CD14-positive monocyte (primary cell): ENCODE measurements at regions of chr5 and their contacts with region 1.

Region 1: DNA sequence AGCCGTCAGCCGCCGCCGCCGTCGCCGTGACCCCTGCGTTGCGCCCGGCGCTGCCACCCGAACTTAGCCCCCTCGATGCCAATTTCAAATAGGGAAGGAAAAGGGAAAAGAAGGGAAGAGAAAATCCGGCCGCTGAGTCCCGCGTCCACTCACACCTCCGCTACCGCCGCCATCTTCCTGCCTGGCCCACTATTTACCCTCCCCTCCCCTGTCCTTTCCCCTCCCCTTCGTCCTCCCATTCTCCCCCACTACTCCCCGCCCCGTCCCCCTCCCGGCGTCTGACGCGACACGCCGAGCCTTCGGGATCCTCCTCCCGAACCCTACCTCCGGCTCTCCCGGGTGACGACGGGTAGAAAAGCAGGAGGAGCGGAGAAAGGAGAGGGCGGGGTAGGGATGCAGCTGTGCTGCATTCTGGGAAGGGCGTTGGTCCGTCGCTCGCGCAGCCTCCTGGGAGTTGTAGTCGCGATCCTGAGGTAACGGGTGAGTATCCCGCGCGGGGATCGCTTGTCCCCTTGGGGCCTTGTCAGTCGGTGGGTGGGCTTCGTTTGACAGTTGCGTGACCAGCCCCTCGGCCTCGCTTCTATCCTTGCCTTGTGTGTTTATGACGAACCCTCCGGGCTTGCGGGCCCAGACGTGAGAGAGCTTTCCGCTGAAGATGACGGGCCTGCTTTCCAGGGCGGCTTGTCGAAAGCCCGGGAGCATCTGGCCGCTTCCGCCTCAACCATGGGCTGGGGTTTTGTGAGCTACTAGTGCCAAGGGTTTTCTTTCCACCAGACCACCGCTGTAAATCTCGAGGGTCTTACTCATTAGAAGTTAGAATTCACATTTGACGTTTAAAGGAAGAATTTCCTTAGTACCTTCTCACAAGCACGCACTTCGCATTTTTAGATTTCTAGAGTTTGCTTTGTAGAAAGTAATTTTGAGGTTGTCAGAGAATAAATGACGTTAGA is at the starts of genes CERT1 and POLK:
- DNase-seq: peak; percentile 92 to 98 (median 95)
- H3K4me3 ChIP-seq: peak within 1 kb of the TSS; percentile 81 to 98 (median 91)
- H3K4me3 Mint-ChIP-seq: peak within 1 kb of the TSS; percentile 98 to 99
- H3K27ac ChIP-seq: peak within 1 kb of the TSS; percentile 83 to 94
- H3K27ac Mint-ChIP-seq: peak within 1 kb of the TSS; percentile 93 to 98 (median 98)
- H3K4me1 ChIP-seq: peaks cover 30 to 61% of the 10 kb centered on the region in 2 donors
- H3K4me1 Mint-ChIP-seq: peaks cover 51% of the 10 kb centered on the region
- H3K27me3 ChIP-seq: no peaks in the 10 kb centered on the region
- H3K27me3 Mint-ChIP-seq: no peaks in the 10 kb centered on the region
- CTCF ChIP-seq: no peak
- polyA plus RNA-seq, gene CERT1: 16.6 to 50.5 (median 45.9) TPM
- polyA plus RNA-seq, gene POLK: 18.1 to 27.2 (median 22.3) TPM

Region 2: GRCh38 chr5:75566710-75567309 is 55.1 kb after region 1 on chr5:
- intact Hi-C with region 1: loop called in 1 of 2 experiments (anchors 10 kb)
- DNase-seq: peak; percentile 75 to 92 (median 90)
- H3K4me3 ChIP-seq: peak overlapping the region in 1 of 3 experiments; percentile 44
- H3K4me3 Mint-ChIP-seq: peak overlapping the region in 1 of 2 donors; percentile 43
- H3K27ac ChIP-seq: peak overlapping the region; percentile 87 to 90
- H3K27ac Mint-ChIP-seq: peak overlapping the region; percentile 86 to 95 (median 93)
- H3K4me1 ChIP-seq: peaks cover 31 to 42% of the 10 kb centered on the region in 2 donors
- H3K4me1 Mint-ChIP-seq: peaks cover 62% of the 10 kb centered on the region
- H3K27me3 ChIP-seq: no peaks in the 10 kb centered on the region
- H3K27me3 Mint-ChIP-seq: peaks cover 0 to 2% (median 0%) of the 10 kb centered on the region in 3 donors
- CTCF ChIP-seq: no peak